ENCODE measurements at regions of chr13 and their contacts with region 1.

Region 1: DNA sequence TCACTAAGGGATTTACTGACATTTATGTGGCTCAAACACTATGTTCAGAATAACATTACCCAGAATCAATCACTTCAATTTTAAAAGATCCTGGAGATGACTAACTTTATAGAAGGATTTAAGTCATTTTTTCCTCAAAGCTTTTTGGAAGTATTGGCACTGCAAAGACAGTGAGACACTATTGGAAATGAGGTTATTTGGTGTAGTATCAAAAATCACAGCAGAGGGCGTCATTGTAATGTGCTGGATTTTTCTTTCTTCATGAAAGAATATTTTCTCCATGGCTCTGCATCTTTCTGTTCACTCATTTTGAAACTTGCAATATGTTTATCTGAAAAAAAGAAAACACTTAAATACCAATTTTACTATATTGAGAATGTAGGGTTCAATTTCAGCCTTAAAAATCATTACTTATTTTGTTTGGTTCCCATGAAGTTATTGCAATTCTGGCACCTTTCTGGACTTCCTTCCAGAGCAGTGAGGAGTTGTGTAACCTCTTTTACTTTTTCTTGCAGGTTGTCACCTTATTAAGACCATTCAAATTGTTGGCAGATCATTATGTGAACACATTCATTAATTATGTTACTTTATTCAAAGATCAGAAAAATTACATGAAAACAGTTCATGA is 3.7 kb upstream of the CSNK1A1L start:
- DNase-seq: peak; percentile 3
- ATAC-seq: no peak
- H3K4me3 ChIP-seq: no peak overlapping the region
- H3K27ac ChIP-seq: no peak overlapping the region
- H3K4me1 ChIP-seq: no peaks in the 10 kb centered on the region
- H3K27me3 ChIP-seq: peaks cover 5 to 6% of the 10 kb centered on the region in 2 experiments; a peak in 3 of 5 replicates
- CTCF ChIP-seq: peak; percentile 54
- EP300 ChIP-seq: no peak
- POLR2A ChIP-seq: no peak
- RAD21 ChIP-seq: no peak

Region 2: GRCh38 chr13:37602747-37603381 is 493.7 kb after region 1 on chr13:
- CTCF ChIA-PET with region 1: interaction called, 3 read pairs
- POLR2A ChIA-PET with region 1: no interaction called
- in situ Hi-C with region 1: loop called (anchors 10 kb)
- intact Hi-C with region 1: loop called (anchors 1 kb)
- DNase-seq: peak; percentile 5
- ATAC-seq: no peak
- H3K4me3 ChIP-seq: no peak overlapping the region
- H3K27ac ChIP-seq: no peak overlapping the region
- H3K4me1 ChIP-seq: no peaks in the 10 kb centered on the region
- H3K27me3 ChIP-seq: no peaks in the 10 kb centered on the region
- CTCF ChIP-seq: no peak
- EP300 ChIP-seq: no peak
- POLR2A ChIP-seq: no peak
- RAD21 ChIP-seq: no peak

Region 3: DNA sequence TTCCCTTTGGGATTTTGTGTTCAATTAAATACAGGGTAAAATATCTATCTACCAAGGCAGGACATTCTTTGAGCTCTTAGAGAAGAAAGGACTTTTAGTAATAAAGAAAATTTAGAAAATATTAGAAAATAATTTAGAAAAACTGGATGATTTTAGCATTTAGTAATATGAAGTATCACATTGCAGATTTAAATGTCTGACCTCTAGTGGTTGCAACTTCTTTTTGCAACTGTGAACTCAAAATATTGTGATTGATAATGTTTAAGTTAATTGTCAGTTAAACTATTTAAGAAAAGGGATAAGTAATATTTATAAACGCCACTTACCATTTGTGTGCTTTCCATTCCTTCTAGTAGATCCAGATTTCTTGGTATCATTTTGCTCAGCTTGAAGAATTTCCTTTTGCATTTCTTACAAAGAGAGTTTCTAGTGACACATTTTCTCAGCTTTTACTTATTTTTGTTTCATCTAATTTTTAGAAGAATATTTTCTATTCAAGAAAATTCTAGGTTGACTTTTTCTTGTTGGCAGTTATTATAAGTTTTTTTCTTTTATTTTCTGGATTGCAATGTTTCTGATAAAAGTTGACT is 499.7 kb after region 1 on chr13:
- CTCF ChIA-PET with region 1: no interaction called
- POLR2A ChIA-PET with region 1: no interaction called
- in situ Hi-C with region 1: loop called (anchors 10 kb)
- intact Hi-C with region 1: loop called (anchors 1 kb)
- DNase-seq: no peak
- ATAC-seq: no peak
- H3K4me3 ChIP-seq: no peak overlapping the region
- H3K27ac ChIP-seq: no peak overlapping the region
- H3K4me1 ChIP-seq: no peaks in the 10 kb centered on the region
- H3K27me3 ChIP-seq: no peaks in the 10 kb centered on the region
- CTCF ChIP-seq: no peak
- EP300 ChIP-seq: no peak
- POLR2A ChIP-seq: no peak
- RAD21 ChIP-seq: no peak